IMR-90 (cell line): ENCODE measurements at regions of chr11 and their contacts with region 1.

Region 1: DNA sequence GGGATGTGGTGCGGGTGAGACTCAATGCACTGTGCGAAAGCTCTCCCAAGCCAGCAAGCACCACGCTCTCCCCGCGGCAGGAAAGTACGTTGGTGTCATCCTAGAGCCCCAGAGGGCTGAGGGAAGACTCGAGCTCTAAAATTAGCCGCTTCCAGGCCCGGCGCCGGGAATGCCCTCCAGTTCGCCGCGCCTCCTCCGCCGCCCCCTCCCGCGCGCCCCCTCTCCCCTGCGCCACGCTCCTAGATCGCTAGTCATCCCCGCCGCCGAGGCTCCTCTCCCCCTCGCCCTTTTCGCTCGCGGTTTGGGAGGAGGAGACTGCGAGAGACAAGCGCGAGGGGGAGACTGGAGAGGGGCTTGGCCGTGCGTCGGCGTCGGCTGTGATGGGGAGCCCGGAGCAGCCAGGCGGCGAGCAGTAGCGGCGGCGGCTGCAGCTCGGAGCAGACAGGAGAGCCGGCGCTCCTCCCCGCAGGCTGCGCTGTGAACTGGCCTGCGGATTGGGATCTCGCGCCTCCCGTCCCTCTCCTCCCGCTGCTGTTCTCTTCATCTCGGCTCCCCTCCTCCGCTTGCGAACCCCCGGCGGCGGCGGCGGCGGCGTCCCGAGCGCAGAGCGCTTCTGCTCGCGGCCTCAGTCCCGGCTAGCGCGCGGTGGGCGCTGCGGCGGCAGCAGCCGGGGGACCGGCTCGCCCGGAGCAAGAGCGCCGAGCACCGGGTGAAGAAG is at the start of gene FAT3:
- DNase-seq: peak; percentile 41
- ATAC-seq: peak; percentile 82
- H3K4me3 ChIP-seq: peak within 1 kb of the TSS; percentile 47
- H3K27ac ChIP-seq: no peak within 1 kb of the TSS
- H3K4me1 ChIP-seq: peaks cover 1% of the 10 kb centered on the region; the same call in 1 of the 2 replicates
- H3K27me3 ChIP-seq: peaks cover 56% of the 10 kb centered on the region
- CTCF ChIP-seq: no peak
- POLR2A ChIP-seq: no peak
- RAD21 ChIP-seq: no peak
- total RNA-seq, gene FAT3: 2.2 and 2.9 TPM in 2 replicates

Region 2: GRCh38 chr11:92180664-92181251 is 43.8 kb before region 1 on chr11:
- CTCF ChIA-PET with region 1: no interaction called
- POLR2A ChIA-PET with region 1: no interaction called
- dilution Hi-C with region 1: no loop called
- in situ Hi-C with region 1: no loop called
- intact Hi-C with region 1: no loop called
- DNase-seq: peak; percentile 47
- ATAC-seq: peak; percentile 77
- H3K4me3 ChIP-seq: no peak overlapping the region
- H3K27ac ChIP-seq: no peak overlapping the region
- H3K4me1 ChIP-seq: no peaks in the 10 kb centered on the region
- H3K27me3 ChIP-seq: no peaks in the 10 kb centered on the region
- CTCF ChIP-seq: no peak
- POLR2A ChIP-seq: no peak
- RAD21 ChIP-seq: no peak

Region 3: GRCh38 chr11:92211576-92212167 is 12.9 kb before region 1 on chr11:
- CTCF ChIA-PET with region 1: no interaction called
- POLR2A ChIA-PET with region 1: no interaction called
- dilution Hi-C with region 1: no loop called
- in situ Hi-C with region 1: no loop called
- intact Hi-C with region 1: no loop called
- DNase-seq: peak; percentile 33
- ATAC-seq: peak; percentile 83
- H3K4me3 ChIP-seq: no peak overlapping the region
- H3K27ac ChIP-seq: no peak overlapping the region
- H3K4me1 ChIP-seq: no peaks in the 10 kb centered on the region
- H3K27me3 ChIP-seq: no peaks in the 10 kb centered on the region
- CTCF ChIP-seq: peak; percentile 39
- POLR2A ChIP-seq: no peak
- RAD21 ChIP-seq: peak; percentile 60

Region 4: DNA sequence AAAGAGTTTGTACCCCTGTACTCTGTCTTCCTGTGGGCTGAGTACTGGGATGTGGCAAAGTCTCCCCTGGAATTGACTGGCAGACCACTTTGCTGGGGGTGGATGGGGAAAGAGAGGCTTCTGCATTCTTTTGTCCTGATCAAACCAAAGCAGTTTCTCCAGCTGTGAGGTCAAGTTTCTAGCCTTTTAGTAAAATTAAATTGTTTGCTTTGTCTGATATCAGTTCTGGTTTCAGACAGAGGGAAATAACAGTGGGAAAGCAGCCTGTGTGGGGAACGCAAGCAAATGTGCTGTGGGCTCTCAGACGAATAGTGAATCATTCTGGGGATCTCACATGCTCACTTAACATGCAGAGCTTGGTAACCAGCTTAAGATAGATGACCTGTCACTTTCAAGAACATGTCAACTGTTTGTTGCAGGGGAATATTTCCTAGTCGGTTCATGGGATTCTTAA is 151.6 kb after region 1 on chr11:
- CTCF ChIA-PET with region 1: no interaction called
- POLR2A ChIA-PET with region 1: no interaction called
- dilution Hi-C with region 1: no loop called
- in situ Hi-C with region 1: no loop called
- intact Hi-C with region 1: loop called (anchors 5 kb)
- DNase-seq: peak; percentile 83
- ATAC-seq: peak; percentile 73
- H3K4me3 ChIP-seq: no peak overlapping the region
- H3K27ac ChIP-seq: no peak overlapping the region
- H3K4me1 ChIP-seq: no peaks in the 10 kb centered on the region; the same call in 1 of the 2 replicates
- H3K27me3 ChIP-seq: no peaks in the 10 kb centered on the region
- CTCF ChIP-seq: no peak
- POLR2A ChIP-seq: no peak
- RAD21 ChIP-seq: no peak

Region 5: DNA sequence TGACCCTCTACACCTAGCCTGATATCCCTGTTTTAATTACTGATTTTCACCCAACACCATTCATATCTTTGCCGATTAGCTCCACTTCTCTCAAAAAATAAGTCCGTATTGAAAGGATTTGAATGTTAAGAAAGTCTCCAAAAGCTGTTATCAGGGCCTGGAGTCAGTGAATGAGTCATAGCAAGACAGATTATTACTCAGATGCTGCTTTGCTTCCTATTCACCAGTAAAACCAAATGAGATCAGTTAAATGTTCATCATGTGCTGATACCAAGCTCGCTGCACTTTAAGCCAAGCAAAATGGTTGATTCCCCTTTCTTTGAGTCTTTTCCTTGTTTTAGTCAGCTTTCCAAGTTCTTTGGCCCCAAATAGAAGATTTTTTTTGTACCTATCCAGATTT is 228.5 kb after region 1 on chr11:
- CTCF ChIA-PET with region 1: no interaction called
- POLR2A ChIA-PET with region 1: no interaction called
- dilution Hi-C with region 1: no loop called
- in situ Hi-C with region 1: no loop called
- intact Hi-C with region 1: loop called (anchors 10 kb)
- DNase-seq: peak; percentile 78
- ATAC-seq: peak; percentile 74
- H3K4me3 ChIP-seq: no peak overlapping the region
- H3K27ac ChIP-seq: no peak overlapping the region
- H3K4me1 ChIP-seq: no peaks in the 10 kb centered on the region
- H3K27me3 ChIP-seq: no peaks in the 10 kb centered on the region
- CTCF ChIP-seq: no peak
- POLR2A ChIP-seq: no peak
- RAD21 ChIP-seq: no peak

Region 6: DNA sequence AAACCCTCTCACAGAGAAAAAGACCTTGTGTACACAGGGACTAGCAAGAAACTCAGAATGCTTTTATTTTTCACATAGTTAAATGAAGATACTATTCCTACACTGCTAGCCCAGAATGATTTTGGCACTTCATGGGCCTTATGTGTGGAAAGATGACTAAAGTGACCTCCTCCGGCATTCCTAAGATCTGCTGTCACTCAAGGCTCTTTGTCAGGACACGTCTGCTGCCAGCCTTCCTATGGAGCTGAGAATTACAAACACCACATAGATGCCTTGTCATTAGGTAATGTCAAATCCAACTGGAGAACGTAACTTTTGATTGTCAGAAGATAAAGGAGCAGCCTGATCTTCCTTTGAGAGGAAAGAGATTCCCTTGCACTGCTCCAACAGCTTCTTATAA is 249.2 kb after region 1 on chr11:
- CTCF ChIA-PET with region 1: no interaction called
- POLR2A ChIA-PET with region 1: interaction called, 12 read pairs
- dilution Hi-C with region 1: no loop called
- in situ Hi-C with region 1: no loop called
- intact Hi-C with region 1: no loop called
- DNase-seq: peak; percentile 1
- ATAC-seq: no peak
- H3K4me3 ChIP-seq: no peak overlapping the region
- H3K27ac ChIP-seq: no peak overlapping the region
- H3K4me1 ChIP-seq: no peaks in the 10 kb centered on the region
- H3K27me3 ChIP-seq: no peaks in the 10 kb centered on the region
- CTCF ChIP-seq: no peak
- POLR2A ChIP-seq: no peak
- RAD21 ChIP-seq: no peak

Region 7: DNA sequence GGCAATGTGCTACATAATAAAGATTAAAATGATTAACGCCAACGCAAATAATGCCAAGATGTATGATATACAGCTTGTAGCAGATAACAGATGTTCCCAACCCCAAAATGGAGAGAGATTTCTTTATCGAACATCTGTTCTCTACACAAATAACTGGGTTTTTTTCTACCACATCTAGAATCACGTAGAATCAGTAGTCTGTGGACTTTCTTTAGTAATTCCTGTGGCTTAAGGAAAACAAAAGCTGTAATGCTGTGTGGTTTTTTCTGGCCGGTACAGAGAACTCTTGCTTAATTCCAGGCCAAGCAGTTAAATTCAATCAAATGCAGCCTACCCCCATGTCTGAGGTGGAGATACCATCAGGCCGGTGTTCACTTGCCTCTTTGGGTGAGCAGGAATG is 303.4 kb after region 1 on chr11:
- CTCF ChIA-PET with region 1: no interaction called
- POLR2A ChIA-PET with region 1: no interaction called
- dilution Hi-C with region 1: no loop called
- in situ Hi-C with region 1: loop called (anchors 25 kb)
- intact Hi-C with region 1: no loop called
- DNase-seq: peak; percentile 46
- ATAC-seq: no peak
- H3K4me3 ChIP-seq: no peak overlapping the region
- H3K27ac ChIP-seq: no peak overlapping the region
- H3K4me1 ChIP-seq: no peaks in the 10 kb centered on the region
- H3K27me3 ChIP-seq: no peaks in the 10 kb centered on the region
- CTCF ChIP-seq: no peak
- POLR2A ChIP-seq: no peak
- RAD21 ChIP-seq: no peak